ENCODE measurements at regions of chr17 and their contacts with region 1.

Region 1: GRCh38 chr17:45428050-45428617 is 4.5 kb downstream of the ARHGAP27 start:
- DNase-seq: peak; percentile 65
- H3K4me3 ChIP-seq: no peak overlapping the region
- H3K27ac ChIP-seq: no peak overlapping the region
- H3K4me1 ChIP-seq: peaks cover under 1% of the 10 kb centered on the region
- H3K27me3 ChIP-seq: no peaks in the 10 kb centered on the region
- CTCF ChIP-seq: peak; percentile 91 to 97
- POLR2A ChIP-seq: no peak

Region 2: GRCh38 chr17:45293413-45294211 is 134.5 kb before region 1 on chr17:
- CTCF ChIA-PET with region 1: no interaction called
- POLR2A ChIA-PET with region 1: no interaction called
- dilution Hi-C with region 1: no loop called
- intact Hi-C with region 1: no loop called
- DNase-seq: peak; percentile 94
- H3K4me3 ChIP-seq: no peak overlapping the region
- H3K27ac ChIP-seq: peak overlapping the region; percentile 50
- H3K4me1 ChIP-seq: peaks cover 45% of the 10 kb centered on the region
- H3K27me3 ChIP-seq: no peaks in the 10 kb centered on the region
- CTCF ChIP-seq: peak; percentile 5 to 30
- POLR2A ChIP-seq: peak; percentile 41

Region 3: GRCh38 chr17:45394913-45395568 is 33.1 kb before region 1 on chr17:
- CTCF ChIA-PET with region 1: interaction called, 5 read pairs
- POLR2A ChIA-PET with region 1: no interaction called
- dilution Hi-C with region 1: no loop called
- intact Hi-C with region 1: loop called (anchors 2 kb)
- DNase-seq: peak; percentile 78
- H3K4me3 ChIP-seq: no peak overlapping the region
- H3K27ac ChIP-seq: no peak overlapping the region
- H3K4me1 ChIP-seq: no peaks in the 10 kb centered on the region
- H3K27me3 ChIP-seq: no peaks in the 10 kb centered on the region
- CTCF ChIP-seq: peak; percentile 62 to 78
- POLR2A ChIP-seq: no peak

Region 4: GRCh38 chr17:45413498-45413923 is 14.6 kb before region 1 on chr17:
- CTCF ChIA-PET with region 1: interaction called, 11 read pairs
- POLR2A ChIA-PET with region 1: no interaction called
- dilution Hi-C with region 1: no loop called
- intact Hi-C with region 1: no loop called
- DNase-seq: no peak
- H3K4me3 ChIP-seq: no peak overlapping the region
- H3K27ac ChIP-seq: no peak overlapping the region
- H3K4me1 ChIP-seq: peaks cover 12% of the 10 kb centered on the region
- H3K27me3 ChIP-seq: no peaks in the 10 kb centered on the region
- CTCF ChIP-seq: no peak
- POLR2A ChIP-seq: no peak

Region 5: DNA sequence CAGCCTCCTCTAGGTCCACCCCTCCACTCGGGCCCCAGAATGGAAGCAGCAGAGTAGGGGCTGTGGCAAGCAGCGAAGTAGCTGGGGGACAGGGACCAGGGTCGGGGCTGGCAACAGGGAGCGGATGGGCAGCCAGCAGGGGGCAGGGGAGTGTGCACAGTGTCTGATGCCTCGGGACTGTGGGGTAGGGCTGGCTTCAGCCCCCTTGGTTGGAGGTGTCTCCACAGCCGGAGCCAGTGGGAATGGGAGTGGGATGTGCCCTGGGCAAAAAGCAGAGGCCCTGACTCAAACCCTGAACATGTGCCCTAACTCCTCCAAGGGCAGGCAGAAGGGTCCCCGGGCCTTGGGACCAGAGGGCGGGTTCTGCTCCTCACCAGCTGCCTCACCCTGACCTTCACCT is 23.0 kb after region 1 on chr17:
- CTCF ChIA-PET with region 1: interaction called, 5 read pairs
- POLR2A ChIA-PET with region 1: no interaction called
- dilution Hi-C with region 1: no loop called
- intact Hi-C with region 1: loop called (anchors 1 kb)
- DNase-seq: no peak
- H3K4me3 ChIP-seq: no peak overlapping the region
- H3K27ac ChIP-seq: no peak overlapping the region
- H3K4me1 ChIP-seq: peaks cover 12% of the 10 kb centered on the region
- H3K27me3 ChIP-seq: no peaks in the 10 kb centered on the region
- CTCF ChIP-seq: peak in 1 of 2 donors; percentile 40
- POLR2A ChIP-seq: no peak